ENCODE measurements at regions of chr20 and their contacts with region 1.

Region 1: GRCh38 chr20:53547664-53548239 is 45.9 kb downstream of the ZNF217 start:
- DNase-seq: peak; percentile 69 to 75
- ATAC-seq: peak; percentile 85 to 90
- H3K4me3 ChIP-seq: no peak overlapping the region
- H3K27ac ChIP-seq: no peak overlapping the region
- H3K4me1 ChIP-seq: peaks cover 4% of the 10 kb centered on the region; the same call in 1 of the 3 replicates
- CTCF ChIP-seq: peak; percentile 86
- EP300 ChIP-seq: no peak
- POLR2A ChIP-seq: no peak
- RAD21 ChIP-seq: peak; percentile 91 to 93

Region 2: DNA sequence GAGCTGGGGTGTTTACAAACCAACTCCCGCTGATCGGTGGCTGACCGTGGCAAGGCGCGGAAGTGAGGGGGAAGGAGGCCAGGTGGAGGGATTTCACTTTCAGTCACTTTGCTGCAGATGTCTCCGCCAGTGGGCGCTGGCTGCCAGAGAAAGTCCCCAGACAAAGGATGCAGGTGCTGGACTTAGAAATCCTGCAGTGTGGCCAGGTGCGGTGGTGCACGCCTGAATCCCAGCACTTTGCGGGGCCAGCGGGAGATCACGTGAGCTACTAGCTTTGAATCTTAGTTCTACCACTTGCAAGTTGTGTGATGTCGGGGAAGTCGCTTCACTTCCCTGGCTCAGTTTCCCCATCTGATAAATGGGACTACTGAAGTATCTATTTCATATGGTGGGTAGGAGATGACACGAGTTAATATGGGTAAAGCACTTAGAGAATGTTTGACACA is 134.5 kb before region 1 on chr20:
- CTCF ChIA-PET with region 1: interaction called, 20 read pairs
- POLR2A ChIA-PET with region 1: no interaction called
- DNase-seq: peak; percentile 35 to 59
- ATAC-seq: peak; percentile 74 to 84; a peak in 4 of 6 replicates
- H3K4me3 ChIP-seq: no peak overlapping the region
- H3K27ac ChIP-seq: no peak overlapping the region
- H3K4me1 ChIP-seq: no peaks in the 10 kb centered on the region
- CTCF ChIP-seq: peak; percentile 52
- EP300 ChIP-seq: no peak
- POLR2A ChIP-seq: no peak
- RAD21 ChIP-seq: peak; percentile 59 to 73

Region 3: GRCh38 chr20:53623454-53624211 is 75.9 kb after region 1 on chr20:
- CTCF ChIA-PET with region 1: no interaction called
- POLR2A ChIA-PET with region 1: no interaction called
- DNase-seq: peak; percentile 71 to 88
- ATAC-seq: peak; percentile 83
- H3K4me3 ChIP-seq: peak overlapping the region; percentile 37
- H3K27ac ChIP-seq: peak overlapping the region; percentile 93 to 98
- H3K4me1 ChIP-seq: peaks cover 38% of the 10 kb centered on the region
- CTCF ChIP-seq: 0 out of 3 replicates have a peak, but pooled peaks have one; percentile 24
- EP300 ChIP-seq: no peak
- POLR2A ChIP-seq: no peak; the same call in 1 of the 2 replicates
- RAD21 ChIP-seq: peak; percentile 38 to 49; a peak in 4 of 5 replicates